ENCODE measurements at regions of chr13 and their contacts with region 1.

Region 1: GRCh38 chr13:99467764-99468163 is 33.5 kb upstream of the TM9SF2 start:
- DNase-seq: no peak
- CTCF ChIP-seq: no peak

Region 2: DNA sequence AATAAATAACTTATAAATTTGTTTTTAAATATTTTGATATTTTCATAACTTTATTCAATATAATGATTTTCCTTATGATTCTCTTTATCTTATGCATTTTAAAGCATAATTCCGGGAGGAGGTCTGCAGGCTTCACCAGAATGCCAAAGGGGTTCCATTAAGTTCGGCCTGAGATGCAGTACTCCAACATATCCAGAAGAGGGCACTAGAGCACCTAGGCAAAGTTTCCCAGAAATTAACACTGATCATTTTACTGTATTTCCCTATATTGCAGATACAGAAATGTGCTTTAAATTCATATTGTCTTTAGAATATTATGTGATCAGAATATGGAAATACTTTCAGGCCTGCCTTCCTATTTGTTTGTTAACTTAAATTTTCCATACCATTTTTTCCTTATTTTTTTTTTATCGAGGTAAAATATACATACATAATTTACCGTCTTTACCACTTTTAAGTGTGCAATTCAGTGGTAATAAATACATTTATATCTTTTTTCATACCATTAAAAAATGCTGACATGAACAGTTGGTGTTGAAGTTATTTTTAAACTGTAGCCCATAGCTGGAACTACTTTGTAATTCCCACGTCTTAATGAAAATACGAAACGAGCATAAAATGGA is 25.4 kb before region 1 on chr13:
- CTCF ChIA-PET with region 1: interaction called, 11 read pairs
- POLR2A ChIA-PET with region 1: no interaction called
- DNase-seq: peak; percentile 55
- CTCF ChIP-seq: peak; percentile 84

Region 3: DNA sequence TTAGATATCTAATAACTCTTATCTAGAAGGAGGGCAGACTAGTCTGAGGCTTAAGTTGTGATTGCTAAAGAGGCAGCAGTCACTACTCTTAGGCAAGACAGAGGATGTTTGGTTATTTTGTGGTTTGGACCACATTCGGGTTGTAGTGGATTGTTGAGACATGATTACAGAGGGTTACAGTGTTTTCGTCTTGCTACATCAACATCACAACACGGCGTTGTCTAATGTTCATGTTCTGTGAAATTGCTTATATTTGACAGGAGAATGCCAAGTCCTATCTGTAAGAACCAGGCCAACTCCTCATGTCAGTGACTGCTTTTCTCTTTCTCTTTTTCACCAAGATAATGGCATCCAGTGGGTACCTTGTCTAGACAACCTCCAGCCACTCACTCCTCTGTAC is 16.7 kb after region 1 on chr13:
- CTCF ChIA-PET with region 1: interaction called, 13 read pairs
- POLR2A ChIA-PET with region 1: no interaction called
- DNase-seq: no peak
- CTCF ChIP-seq: no peak

Measured in GM10248 (cell line).